Activated B cell treated with CpG ODN at 0.5 μM for 24 hours (primary cell): ENCODE measurements at regions of chr9 and their contacts with region 1.

Region 1: GRCh38 chr9:3525836-3526164 is at the start of gene RFX3:
- DNase-seq: no peak
- ATAC-seq: peak; percentile 61
- H3K4me3 Mint-ChIP-seq: peak within 1 kb of the TSS; percentile 97
- H3K27ac Mint-ChIP-seq: peak within 1 kb of the TSS; percentile 100
- H3K4me1 Mint-ChIP-seq: peaks cover 60% of the 10 kb centered on the region
- H3K27me3 Mint-ChIP-seq: no peaks in the 10 kb centered on the region
- CTCF ChIP-seq: no peak
- total RNA-seq, gene RFX3: 34.6 and 39.1 TPM in 2 replicates

Region 2: GRCh38 chr9:2849941-2850340 is 675.9 kb before region 1 on chr9:
- CTCF ChIA-PET with region 1: no interaction called
- POLR2A ChIA-PET with region 1: interaction called, 30 read pairs
- intact Hi-C with region 1: loop called (anchors 2 kb)
- DNase-seq: no peak
- ATAC-seq: no peak
- H3K4me3 Mint-ChIP-seq: no peak overlapping the region
- H3K27ac Mint-ChIP-seq: no peak overlapping the region
- H3K4me1 Mint-ChIP-seq: peaks cover 8% of the 10 kb centered on the region
- H3K27me3 Mint-ChIP-seq: peaks cover 24% of the 10 kb centered on the region
- CTCF ChIP-seq: no peak

Region 3: GRCh38 chr9:3441197-3441816 is 84.5 kb before region 1 on chr9:
- CTCF ChIA-PET with region 1: interaction called, 9 read pairs
- POLR2A ChIA-PET with region 1: interaction called, 11 read pairs
- intact Hi-C with region 1: no loop called
- DNase-seq: no peak
- ATAC-seq: peak; percentile 92
- H3K4me3 Mint-ChIP-seq: no peak overlapping the region
- H3K27ac Mint-ChIP-seq: no peak overlapping the region
- H3K4me1 Mint-ChIP-seq: peaks cover 11% of the 10 kb centered on the region
- H3K27me3 Mint-ChIP-seq: no peaks in the 10 kb centered on the region
- CTCF ChIP-seq: no peak

Region 4: DNA sequence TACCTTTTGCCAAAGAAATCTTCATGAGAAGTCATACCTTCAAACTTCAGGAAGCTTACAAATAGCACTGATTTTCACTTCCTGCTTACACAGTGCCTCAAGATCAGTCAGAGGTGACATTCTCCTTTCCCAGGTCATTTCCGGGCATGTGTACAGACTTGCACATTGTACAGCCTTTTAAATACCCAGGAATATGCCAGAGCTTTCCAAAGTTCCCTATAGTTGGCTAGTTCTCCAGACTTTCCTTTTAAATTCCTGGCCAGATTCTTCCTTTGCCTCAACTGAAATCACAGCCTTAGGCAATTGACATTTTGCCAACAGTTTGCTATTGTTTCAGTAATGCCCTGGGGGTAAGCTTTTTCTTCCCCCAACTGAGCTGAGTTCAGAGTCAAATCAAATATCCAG is 47.2 kb before region 1 on chr9:
- CTCF ChIA-PET with region 1: interaction called, 4 read pairs
- POLR2A ChIA-PET with region 1: interaction called, 309 read pairs
- intact Hi-C with region 1: loop called (anchors 1 kb)
- DNase-seq: no peak
- ATAC-seq: peak; percentile 65
- H3K4me3 Mint-ChIP-seq: peak overlapping the region; percentile 55
- H3K27ac Mint-ChIP-seq: peak overlapping the region; percentile 94
- H3K4me1 Mint-ChIP-seq: peaks cover 68% of the 10 kb centered on the region
- H3K27me3 Mint-ChIP-seq: no peaks in the 10 kb centered on the region
- CTCF ChIP-seq: no peak

Region 5: DNA sequence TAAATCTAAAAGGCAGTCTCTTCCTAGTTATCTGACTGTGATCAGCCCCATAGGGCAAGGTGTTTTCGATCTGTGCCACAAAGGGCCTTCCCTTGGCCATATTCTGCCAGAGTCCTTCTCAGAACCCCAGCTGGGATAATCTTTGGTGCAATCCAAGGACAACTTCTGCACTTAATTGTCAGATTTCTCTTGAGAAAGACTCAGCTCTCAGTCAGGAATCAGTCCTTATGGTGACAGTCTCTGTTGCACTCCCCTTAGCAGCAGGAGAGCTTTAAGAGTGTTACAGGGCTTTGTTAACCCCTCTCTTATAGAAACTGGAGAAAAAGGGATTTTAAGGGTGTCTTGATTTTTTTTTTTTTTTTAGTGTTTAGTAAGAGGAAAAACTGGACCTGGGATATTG is 15.4 kb after region 1 on chr9:
- CTCF ChIA-PET with region 1: no interaction called
- POLR2A ChIA-PET with region 1: interaction called, 5 read pairs
- intact Hi-C with region 1: loop called (anchors 2 kb)
- DNase-seq: no peak
- ATAC-seq: no peak
- H3K4me3 Mint-ChIP-seq: no peak overlapping the region
- H3K27ac Mint-ChIP-seq: no peak overlapping the region
- H3K4me1 Mint-ChIP-seq: no peaks in the 10 kb centered on the region
- H3K27me3 Mint-ChIP-seq: no peaks in the 10 kb centered on the region
- CTCF ChIP-seq: no peak

Region 6: DNA sequence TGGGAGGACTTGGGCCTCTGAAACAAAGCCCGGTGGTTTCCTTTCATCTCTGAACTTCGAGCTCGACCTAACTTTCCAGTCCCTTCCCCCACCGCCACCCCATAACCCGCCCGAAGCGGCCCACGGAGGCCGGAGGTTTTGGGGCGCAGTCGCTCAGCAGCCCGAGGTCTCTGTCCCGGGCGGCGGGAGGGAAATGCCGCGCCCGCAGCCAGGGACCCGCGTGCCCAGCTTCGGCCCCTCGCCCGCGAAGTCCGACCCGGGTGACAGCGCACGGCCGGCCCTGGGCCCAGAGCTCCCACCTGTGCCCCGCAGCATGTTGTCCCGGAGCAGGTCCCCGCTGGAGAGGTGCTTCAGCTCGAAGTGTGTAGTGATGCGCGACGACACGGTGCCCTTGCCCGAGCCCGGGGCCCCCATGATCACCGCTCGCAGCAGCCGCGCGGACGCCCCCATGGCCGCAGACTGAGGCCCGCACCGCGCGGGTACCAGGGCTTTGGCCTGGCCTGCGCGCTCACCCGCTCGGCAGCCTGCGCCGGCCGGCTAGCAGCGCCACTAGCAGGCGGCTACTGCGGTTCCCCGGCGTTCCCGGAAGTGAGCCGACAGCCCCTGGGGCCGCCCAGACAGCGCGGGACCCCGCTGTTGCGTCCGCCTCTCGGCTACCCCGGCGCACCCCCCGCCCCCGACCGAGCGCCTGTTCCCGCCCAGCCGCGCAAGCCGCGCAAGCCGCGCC is 1215.0 kb after region 1 on chr9 and contains the start of gene AK3:
- CTCF ChIA-PET with region 1: no interaction called
- POLR2A ChIA-PET with region 1: no interaction called
- intact Hi-C with region 1: loop called (anchors 2 kb)
- DNase-seq: peak; percentile 79
- ATAC-seq: peak; percentile 93
- H3K4me3 Mint-ChIP-seq: peak within 1 kb of the TSS; percentile 90
- H3K27ac Mint-ChIP-seq: peak within 1 kb of the TSS; percentile 83
- H3K4me1 Mint-ChIP-seq: peaks cover 30% of the 10 kb centered on the region
- H3K27me3 Mint-ChIP-seq: no peaks in the 10 kb centered on the region
- CTCF ChIP-seq: no peak
- total RNA-seq, gene AK3: 14.5 and 16.9 TPM in 2 replicates